Naive thymus-derived CD8-positive, alpha-beta T cell (primary cell): ENCODE measurements at regions of chr1 and their contacts with region 1.

Region 1: GRCh38 chr1:2499986-2500596 is 24.0 kb downstream of the PLCH2 start:
- DNase-seq: peak in 1 of 10 donors; percentile 29
- ATAC-seq: peak; percentile 29 to 53
- H3K4me3 Mint-ChIP-seq: peak overlapping the region in 9 of 10 donors; percentile 29 to 86 (median 64)
- H3K27ac Mint-ChIP-seq: peak overlapping the region in 8 of 10 donors; percentile 29 to 86 (median 80)
- H3K4me1 Mint-ChIP-seq: peaks cover 9 to 44% (median 36%) of the 10 kb centered on the region in 4 donors
- H3K27me3 Mint-ChIP-seq: no peaks in the 10 kb centered on the region

Region 2: DNA sequence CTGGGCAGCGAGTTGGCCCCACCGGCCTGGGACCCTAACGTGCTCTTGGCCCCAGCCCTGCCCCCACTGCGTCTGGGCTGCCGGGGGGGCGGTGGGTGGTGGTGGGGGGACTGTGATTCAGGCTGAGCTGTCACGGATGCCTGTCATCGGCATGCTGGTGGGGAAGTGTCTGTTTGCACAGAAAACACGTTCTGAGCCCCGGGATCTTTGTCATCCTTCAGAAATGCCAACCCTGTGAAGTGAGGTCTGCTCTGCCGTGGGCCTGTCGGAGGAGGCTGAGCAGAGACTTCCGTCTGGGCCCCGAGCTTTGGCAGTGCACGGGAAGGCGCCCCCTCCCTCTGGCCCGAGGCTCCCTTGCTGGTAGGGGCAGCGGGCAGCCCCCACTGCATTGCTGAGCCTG is 48.3 kb before region 1 on chr1:
- POLR2A ChIA-PET with region 1: no interaction called
- DNase-seq: no peak
- ATAC-seq: no peak
- H3K4me3 Mint-ChIP-seq: no peak overlapping the region
- H3K27ac Mint-ChIP-seq: no peak overlapping the region
- H3K4me1 Mint-ChIP-seq: peaks cover 0 to 7% (median 1%) of the 10 kb centered on the region in 4 donors
- H3K27me3 Mint-ChIP-seq: no peaks in the 10 kb centered on the region

Region 3: DNA sequence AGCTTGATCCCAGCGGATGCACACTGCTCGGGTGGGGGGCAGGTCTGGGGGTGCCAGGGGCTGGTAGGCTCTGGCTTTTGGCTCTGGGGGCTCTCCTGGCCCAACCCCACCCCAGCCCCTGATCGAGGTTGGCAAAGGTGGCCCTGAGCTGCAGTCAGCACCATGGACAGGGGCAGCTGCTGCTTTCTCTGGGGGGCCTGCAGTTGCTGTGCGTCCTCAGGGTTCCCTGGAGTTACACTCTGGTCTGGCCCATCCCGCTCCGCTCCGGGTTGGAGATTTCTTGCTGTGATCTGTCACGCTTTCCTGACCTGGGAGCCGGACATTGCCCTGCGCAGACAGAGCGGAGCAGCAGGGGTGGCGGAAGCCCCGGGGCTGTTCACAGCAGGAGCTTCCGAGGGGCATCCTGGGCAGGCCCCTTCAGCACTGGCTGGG is 32.0 kb before region 1 on chr1:
- POLR2A ChIA-PET with region 1: no interaction called
- DNase-seq: peak; percentile 26 to 73 (median 56)
- ATAC-seq: peak; percentile 63 to 76
- H3K4me3 Mint-ChIP-seq: no peak overlapping the region
- H3K27ac Mint-ChIP-seq: no peak overlapping the region
- H3K4me1 Mint-ChIP-seq: peaks cover 4 to 7% (median 5%) of the 10 kb centered on the region in 4 donors
- H3K27me3 Mint-ChIP-seq: peaks cover 0 to 13% (median 6%) of the 10 kb centered on the region in 5 donors

Region 4: DNA sequence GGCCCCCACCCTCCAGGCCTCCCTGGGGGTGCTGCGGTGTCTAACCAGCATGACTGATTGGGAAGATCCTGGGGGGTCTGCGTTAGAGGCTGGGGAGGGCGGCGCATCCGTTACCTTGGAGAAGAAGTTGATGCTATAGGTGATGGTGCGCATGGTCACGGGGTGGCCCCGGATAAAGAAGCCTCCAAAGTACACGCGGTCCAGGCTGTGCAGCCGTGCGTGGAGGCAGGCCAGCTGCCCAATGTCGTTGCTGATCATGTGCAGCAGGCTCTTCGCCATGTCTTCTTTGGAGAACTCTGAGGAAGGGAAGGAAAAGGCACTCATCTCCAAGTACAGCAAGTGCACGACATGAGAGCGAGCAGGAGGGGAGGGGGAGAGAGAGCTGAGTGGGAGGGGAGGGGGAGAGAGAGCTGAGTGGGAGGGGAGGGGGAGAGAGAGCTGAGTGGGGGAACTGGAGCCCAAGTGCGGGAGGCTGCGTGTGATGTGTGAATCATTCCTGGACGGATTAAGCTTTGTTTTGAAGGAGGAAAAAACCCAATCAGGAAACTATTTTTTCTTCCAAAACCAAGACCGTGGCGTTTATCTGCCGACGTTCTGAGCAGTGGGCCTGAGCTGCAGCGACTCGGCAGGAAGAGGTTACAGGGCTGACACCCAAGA is 19.1 kb after region 1 on chr1:
- POLR2A ChIA-PET with region 1: interaction called, 78 read pairs
- DNase-seq: no peak
- ATAC-seq: no peak
- H3K4me3 Mint-ChIP-seq: no peak overlapping the region
- H3K27ac Mint-ChIP-seq: no peak overlapping the region
- H3K4me1 Mint-ChIP-seq: peaks cover 15 to 28% (median 22%) of the 10 kb centered on the region in 4 donors
- H3K27me3 Mint-ChIP-seq: no peaks in the 10 kb centered on the region

Region 5: GRCh38 chr1:2855206-2856065 is 355.3 kb after region 1 on chr1:
- POLR2A ChIA-PET with region 1: no interaction called
- DNase-seq: no peak
- ATAC-seq: no peak
- H3K4me3 Mint-ChIP-seq: no peak overlapping the region
- H3K27ac Mint-ChIP-seq: no peak overlapping the region
- H3K4me1 Mint-ChIP-seq: peaks cover 0 to 6% (median 3%) of the 10 kb centered on the region in 4 donors
- H3K27me3 Mint-ChIP-seq: peaks cover 0 to 18% (median 10%) of the 10 kb centered on the region in 5 donors